ENCODE measurements at regions of chr6 and their contacts with region 1.

Region 1: DNA sequence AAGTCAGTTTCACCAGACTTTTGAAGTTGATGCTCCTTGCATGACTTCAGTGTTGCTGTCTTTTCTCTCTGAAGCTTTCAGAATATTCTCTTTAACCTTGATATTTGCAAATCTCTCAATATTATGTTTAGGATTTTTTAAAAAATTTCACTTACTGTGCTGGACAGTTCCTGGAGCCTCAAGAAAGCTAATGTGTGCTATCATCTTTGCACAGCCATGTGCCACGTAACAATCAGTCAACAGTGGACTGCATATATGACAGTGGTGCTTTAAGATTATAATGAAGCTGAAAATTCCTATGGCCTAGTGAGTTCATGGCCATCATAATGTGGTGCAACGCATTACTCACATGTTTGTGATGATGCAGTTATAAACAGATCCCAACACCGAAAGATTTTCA is 59.1 kb upstream of the OGFRL1 start:
- DNase-seq: peak in 2 of 3 donors; percentile 23 to 48
- H3K4me3 ChIP-seq: no peak overlapping the region
- H3K27ac ChIP-seq: no peak overlapping the region
- H3K4me1 ChIP-seq: peaks cover 16 to 32% (median 24%) of the 10 kb centered on the region in 4 experiments
- H3K27me3 ChIP-seq: no peaks in the 10 kb centered on the region

Region 2: GRCh38 chr6:71250099-71250606 is 20.7 kb after region 1 on chr6:
- CTCF ChIA-PET with region 1: interaction called, 11 read pairs
- POLR2A ChIA-PET with region 1: no interaction called
- DNase-seq: peak in 2 of 3 donors; percentile 52 to 54
- H3K4me3 ChIP-seq: peak overlapping the region in 1 of 7 experiments; percentile 6
- H3K27ac ChIP-seq: no peak overlapping the region
- H3K4me1 ChIP-seq: peaks cover 13 to 73% (median 30%) of the 10 kb centered on the region in 4 experiments
- H3K27me3 ChIP-seq: no peaks in the 10 kb centered on the region

Region 3: GRCh38 chr6:71288228-71289001 is 58.9 kb after region 1 on chr6 and contains the start of gene OGFRL1:
- CTCF ChIA-PET with region 1: interaction called, 12 read pairs
- POLR2A ChIA-PET with region 1: interaction called, 4 read pairs
- DNase-seq: peak; percentile 68 to 90 (median 83)
- H3K4me3 ChIP-seq: peak within 1 kb of the TSS; percentile 62 to 88 (median 84)
- H3K27ac ChIP-seq: peak within 1 kb of the TSS; percentile 9 to 67
- H3K4me1 ChIP-seq: peaks cover 13 to 39% (median 30%) of the 10 kb centered on the region in 4 experiments
- H3K27me3 ChIP-seq: no peaks in the 10 kb centered on the region